Transverse colon (tissue), 4 donors: ENCODE measurements at regions of chr1 and their contacts with region 1.

Region 1: GRCh38 chr1:153261281-153262069 is 2.0 kb downstream of the LORICRIN start:
- DNase-seq: no peak
- H3K4me3 ChIP-seq: peak overlapping the region; percentile 7 to 55 (median 32)
- H3K27ac ChIP-seq: no peak overlapping the region
- H3K4me1 ChIP-seq: peaks cover 0 to 19% (median 9%) of the 10 kb centered on the region in 4 donors
- H3K27me3 ChIP-seq: peaks cover 81% of the 10 kb centered on the region
- CTCF ChIP-seq: no peak
- EP300 ChIP-seq: no peak
- POLR2A ChIP-seq: no peak

Region 2: DNA sequence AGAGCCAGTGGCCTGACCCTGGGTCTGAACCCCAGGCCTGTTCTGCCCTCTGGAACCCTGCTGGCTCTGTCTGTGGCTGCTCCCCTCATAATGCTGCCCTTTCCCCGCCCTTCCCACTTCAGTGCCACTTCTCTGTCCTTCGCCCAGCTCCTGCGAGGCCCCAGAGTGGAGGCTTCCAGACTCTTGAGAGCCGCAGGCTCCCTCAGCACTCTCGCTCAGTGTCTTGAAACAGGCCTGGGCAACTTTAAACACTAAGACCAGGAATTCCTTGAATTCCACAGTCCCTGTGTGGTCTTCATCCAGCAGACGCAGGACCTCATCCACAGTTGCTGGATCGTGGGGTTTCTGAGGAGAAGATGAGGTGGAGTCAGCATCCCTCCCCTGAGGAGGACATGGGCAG is 850.9 kb before region 1 on chr1:
- in situ Hi-C with region 1: no loop called
- intact Hi-C with region 1: no loop called
- DNase-seq: no peak
- H3K4me3 ChIP-seq: no peak overlapping the region
- H3K27ac ChIP-seq: no peak overlapping the region
- H3K4me1 ChIP-seq: no peaks in the 10 kb centered on the region
- H3K27me3 ChIP-seq: no peaks in the 10 kb centered on the region
- CTCF ChIP-seq: no peak
- EP300 ChIP-seq: no peak
- POLR2A ChIP-seq: no peak

Region 3: GRCh38 chr1:153233448-153233847 is 28.0 kb before region 1 on chr1:
- in situ Hi-C with region 1: no loop called
- intact Hi-C with region 1: loop called (anchors 1 kb)
- DNase-seq: no peak
- H3K4me3 ChIP-seq: no peak overlapping the region
- H3K27ac ChIP-seq: no peak overlapping the region
- H3K4me1 ChIP-seq: no peaks in the 10 kb centered on the region
- H3K27me3 ChIP-seq: peaks cover 4% of the 10 kb centered on the region
- CTCF ChIP-seq: no peak
- EP300 ChIP-seq: no peak
- POLR2A ChIP-seq: no peak